Panc1 (cell line): ENCODE measurements at regions of chr16 and their contacts with region 1.

Region 1: DNA sequence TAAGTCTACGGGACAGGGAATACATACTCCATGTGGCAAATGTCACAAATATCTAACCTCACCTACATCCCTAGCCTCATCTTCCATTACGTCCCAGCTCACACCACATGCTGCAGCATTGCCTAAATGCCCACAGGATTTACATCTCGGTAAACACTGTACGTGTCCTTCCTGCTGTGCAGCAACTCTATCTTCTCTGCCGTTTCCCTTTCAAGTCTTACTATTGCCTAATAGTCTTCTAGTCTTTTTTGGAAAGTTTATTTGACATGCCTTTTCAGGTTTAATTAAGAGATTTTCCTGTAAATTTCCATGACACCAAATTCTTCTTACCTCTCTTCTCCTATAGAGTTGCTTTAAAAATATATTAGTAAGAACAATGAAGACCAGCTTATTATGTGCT is 120.5 kb downstream of the HS3ST4 start:
- DNase-seq: no peak
- ATAC-seq: no peak
- H3K4me3 ChIP-seq: no peak overlapping the region
- H3K27ac ChIP-seq: no peak overlapping the region
- H3K4me1 ChIP-seq: no peaks in the 10 kb centered on the region
- H3K27me3 ChIP-seq: 0 out of 2 replicates have a peak, but pooled peaks cover 4% of the 10 kb centered on the region
- CTCF ChIP-seq: no peak

Region 2: DNA sequence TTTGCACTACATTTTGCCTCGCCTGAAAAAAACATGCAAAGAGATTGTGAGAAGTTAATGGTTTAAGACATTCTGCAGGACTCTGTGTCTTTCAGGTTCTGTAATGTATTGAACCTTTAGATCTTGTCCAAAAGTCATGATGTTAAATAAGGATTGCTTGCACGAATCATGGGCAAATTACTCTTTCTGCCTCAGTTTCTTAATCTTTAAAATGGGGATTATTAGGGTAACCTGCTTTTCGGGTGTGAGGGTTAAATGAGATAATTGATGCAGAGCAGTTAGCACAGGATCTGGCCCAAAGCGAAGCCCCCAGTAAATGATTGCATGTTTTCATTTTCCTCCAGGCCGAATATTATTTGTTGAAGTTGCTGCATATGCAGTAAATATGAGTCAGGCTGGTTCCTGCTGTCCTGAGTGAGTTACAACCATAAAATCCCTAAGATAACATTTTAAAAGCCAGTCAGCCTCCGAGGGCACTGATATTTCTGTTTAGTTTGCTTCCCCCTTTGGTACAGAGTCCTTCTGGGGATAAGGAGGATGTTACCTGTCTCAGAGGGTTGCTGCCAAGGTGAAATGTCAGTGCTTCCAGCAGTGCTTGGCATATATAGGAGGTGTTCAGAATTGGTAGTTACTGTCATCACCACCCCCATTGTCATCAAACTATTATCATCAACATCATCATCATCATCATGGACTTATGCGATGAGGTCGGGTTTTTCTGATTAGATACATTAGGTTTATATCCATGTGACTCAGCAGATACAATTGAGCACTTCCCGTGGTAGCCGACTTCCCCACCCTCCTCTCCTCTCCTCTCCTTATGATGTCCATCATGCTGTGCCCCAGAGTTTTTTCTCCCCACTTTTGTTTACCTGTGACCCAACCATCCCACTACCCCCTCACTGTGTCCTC is 776.5 kb before region 1 on chr16:
- CTCF ChIA-PET with region 1: no interaction called
- POLR2A ChIA-PET with region 1: interaction called, 14 read pairs
- in situ Hi-C with region 1: no loop called
- intact Hi-C with region 1: no loop called
- DNase-seq: no peak
- ATAC-seq: peak; percentile 35; the same call in 1 of the 2 replicates
- H3K4me3 ChIP-seq: no peak overlapping the region
- H3K27ac ChIP-seq: peak overlapping the region; percentile 81
- H3K4me1 ChIP-seq: peaks cover 35% of the 10 kb centered on the region
- H3K27me3 ChIP-seq: no peaks in the 10 kb centered on the region
- CTCF ChIP-seq: no peak

Region 3: DNA sequence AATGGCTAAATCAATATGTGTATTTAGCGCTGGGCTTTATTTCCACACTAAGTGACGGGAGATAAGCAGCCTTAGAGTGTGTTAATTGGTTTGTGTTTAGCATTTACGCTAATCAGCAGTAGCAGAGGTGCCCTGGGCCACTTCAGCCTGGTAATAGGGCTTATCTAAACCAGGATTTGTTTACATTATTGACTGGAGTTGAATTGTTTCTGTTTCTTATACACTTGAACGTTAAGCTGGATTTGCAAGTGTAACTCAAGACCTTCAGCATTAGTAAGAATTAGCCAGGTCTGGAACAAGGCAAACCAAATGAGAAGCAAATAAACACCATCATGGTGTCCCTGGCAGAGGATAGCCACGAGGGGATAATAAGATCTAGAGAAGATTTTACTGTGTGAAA is 193.1 kb after region 1 on chr16:
- CTCF ChIA-PET with region 1: no interaction called
- POLR2A ChIA-PET with region 1: no interaction called
- in situ Hi-C with region 1: no loop called
- intact Hi-C with region 1: no loop called
- DNase-seq: no peak
- ATAC-seq: no peak
- H3K4me3 ChIP-seq: no peak overlapping the region
- H3K27ac ChIP-seq: no peak overlapping the region
- H3K4me1 ChIP-seq: no peaks in the 10 kb centered on the region
- H3K27me3 ChIP-seq: no peaks in the 10 kb centered on the region
- CTCF ChIP-seq: no peak